HCT116 (cell line): ENCODE measurements at regions of chr19 and their contacts with region 1.

Region 1: GRCh38 chr19:33186431-33187182 is 7.5 kb upstream of the LRP3 start:
- DNase-seq: no peak
- ATAC-seq: no peak
- H3K4me3 ChIP-seq: no peak overlapping the region
- H3K27ac ChIP-seq: no peak overlapping the region
- H3K4me1 ChIP-seq: peaks cover 8 to 15% of the 10 kb centered on the region in 2 experiments
- H3K27me3 ChIP-seq: no peaks in the 10 kb centered on the region
- CTCF ChIP-seq: no peak
- POLR2A ChIP-seq: no peak
- RAD21 ChIP-seq: no peak

Region 2: GRCh38 chr19:33125929-33126388 is 60.6 kb before region 1 on chr19:
- CTCF ChIA-PET with region 1: interaction called, 35 read pairs
- POLR2A ChIA-PET with region 1: interaction called, 3 read pairs
- RAD21 ChIA-PET with region 1: interaction called, 3 to 4 read pairs
- intact Hi-C with region 1: loop called (anchors 1 kb)
- DNase-seq: peak; percentile 28
- ATAC-seq: peak; percentile 93
- H3K4me3 ChIP-seq: no peak overlapping the region
- H3K27ac ChIP-seq: no peak overlapping the region
- H3K4me1 ChIP-seq: peaks cover 0 to 4% of the 10 kb centered on the region in 2 experiments; a peak in 2 of 4 replicates
- H3K27me3 ChIP-seq: no peaks in the 10 kb centered on the region
- CTCF ChIP-seq: peak; percentile 60 to 81 (median 80); a peak in 5 of 6 replicates
- POLR2A ChIP-seq: no peak
- RAD21 ChIP-seq: peak; percentile 76

Region 3: DNA sequence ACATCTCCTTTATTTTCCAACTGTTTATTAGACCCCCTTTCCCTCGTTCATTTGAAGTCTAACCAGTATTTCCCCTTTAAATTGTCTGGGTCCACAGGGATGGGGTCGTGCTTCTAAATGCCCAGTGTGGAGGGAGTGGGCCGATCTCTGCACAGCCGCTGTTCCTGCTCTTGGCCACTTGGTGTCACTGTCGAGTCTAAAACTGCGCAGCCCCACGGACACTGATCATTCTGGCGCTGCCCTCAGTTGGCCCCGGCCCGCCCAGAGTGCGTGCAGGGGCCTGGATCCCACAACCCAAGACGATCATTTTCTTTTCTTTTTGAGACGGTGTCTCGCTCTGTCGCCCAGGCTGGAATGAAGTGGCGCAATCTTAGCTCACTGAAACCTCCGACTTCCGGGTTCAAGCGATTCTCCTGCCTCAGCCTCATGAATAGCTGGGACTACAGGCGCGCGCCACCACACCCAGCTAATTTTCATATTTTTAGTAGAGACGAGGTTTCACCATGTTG is 42.7 kb before region 1 on chr19:
- CTCF ChIA-PET with region 1: interaction called, 22 read pairs
- POLR2A ChIA-PET with region 1: no interaction called
- RAD21 ChIA-PET with region 1: interaction called, 3 read pairs
- intact Hi-C with region 1: loop called (anchors 1 kb)
- DNase-seq: peak; percentile 38
- ATAC-seq: peak; percentile 100
- H3K4me3 ChIP-seq: no peak overlapping the region
- H3K27ac ChIP-seq: no peak overlapping the region
- H3K4me1 ChIP-seq: peaks cover 0 to 5% of the 10 kb centered on the region in 2 experiments; a peak in 1 of 4 replicates
- H3K27me3 ChIP-seq: no peaks in the 10 kb centered on the region
- CTCF ChIP-seq: peak; percentile 75 to 92 (median 92); a peak in 5 of 6 replicates
- POLR2A ChIP-seq: no peak
- RAD21 ChIP-seq: peak; percentile 83

Region 4: DNA sequence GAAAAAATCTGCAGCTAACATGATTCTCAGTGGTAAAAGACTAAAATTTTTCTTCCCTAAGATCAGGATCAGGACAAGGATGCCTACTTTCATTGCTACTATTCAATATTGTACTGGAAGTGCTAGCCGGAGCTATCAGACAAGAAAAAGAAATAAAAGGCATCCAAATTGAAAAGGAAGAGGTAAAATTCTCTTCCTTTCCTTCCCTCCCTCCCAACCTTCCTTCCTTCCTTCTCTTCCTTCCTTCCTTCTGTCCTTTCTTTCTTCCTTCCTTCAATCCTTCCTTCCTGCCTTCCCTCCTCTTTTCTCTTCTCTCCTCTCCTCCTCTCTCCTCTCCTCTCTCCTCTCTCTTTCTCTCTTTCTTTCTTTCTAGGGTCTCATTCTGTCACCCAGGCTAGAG is 19.2 kb before region 1 on chr19:
- CTCF ChIA-PET with region 1: interaction called, 11 read pairs
- POLR2A ChIA-PET with region 1: no interaction called
- RAD21 ChIA-PET with region 1: no interaction called
- intact Hi-C with region 1: no loop called
- DNase-seq: no peak
- ATAC-seq: no peak
- H3K4me3 ChIP-seq: no peak overlapping the region
- H3K27ac ChIP-seq: no peak overlapping the region
- H3K4me1 ChIP-seq: peaks cover 11 to 20% of the 10 kb centered on the region in 2 experiments; a peak in 3 of 4 replicates
- H3K27me3 ChIP-seq: no peaks in the 10 kb centered on the region
- CTCF ChIP-seq: no peak
- POLR2A ChIP-seq: no peak
- RAD21 ChIP-seq: no peak